ENCODE measurements at regions of chr11 and their contacts with region 1.

Region 1: DNA sequence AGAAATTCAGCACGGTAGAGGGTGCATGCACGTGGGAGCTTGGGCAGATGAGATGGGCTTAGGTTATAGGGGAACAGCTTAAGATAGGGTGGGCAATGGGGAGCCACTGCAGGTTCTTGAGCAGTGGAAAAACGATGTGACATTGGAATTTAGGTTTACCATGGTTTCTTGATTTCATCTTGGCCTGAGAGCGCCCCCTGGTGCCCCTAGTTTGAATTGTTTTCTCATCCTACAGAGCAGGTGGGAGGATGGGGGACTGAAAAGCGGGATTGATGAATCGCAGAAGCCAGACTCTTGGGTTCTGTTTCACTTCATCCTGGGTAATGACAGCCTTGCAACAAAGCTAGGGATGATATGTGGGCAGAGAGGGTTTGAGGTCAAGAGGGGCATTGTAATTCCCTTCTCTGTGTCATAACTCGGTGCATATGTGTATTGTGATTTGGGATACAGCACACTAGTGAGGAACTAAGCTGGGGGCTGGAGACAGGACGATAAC is 6.7 kb upstream of the MCAM start:
- DNase-seq: peak; percentile 64
- CTCF ChIP-seq: peak; percentile 89

Region 2: DNA sequence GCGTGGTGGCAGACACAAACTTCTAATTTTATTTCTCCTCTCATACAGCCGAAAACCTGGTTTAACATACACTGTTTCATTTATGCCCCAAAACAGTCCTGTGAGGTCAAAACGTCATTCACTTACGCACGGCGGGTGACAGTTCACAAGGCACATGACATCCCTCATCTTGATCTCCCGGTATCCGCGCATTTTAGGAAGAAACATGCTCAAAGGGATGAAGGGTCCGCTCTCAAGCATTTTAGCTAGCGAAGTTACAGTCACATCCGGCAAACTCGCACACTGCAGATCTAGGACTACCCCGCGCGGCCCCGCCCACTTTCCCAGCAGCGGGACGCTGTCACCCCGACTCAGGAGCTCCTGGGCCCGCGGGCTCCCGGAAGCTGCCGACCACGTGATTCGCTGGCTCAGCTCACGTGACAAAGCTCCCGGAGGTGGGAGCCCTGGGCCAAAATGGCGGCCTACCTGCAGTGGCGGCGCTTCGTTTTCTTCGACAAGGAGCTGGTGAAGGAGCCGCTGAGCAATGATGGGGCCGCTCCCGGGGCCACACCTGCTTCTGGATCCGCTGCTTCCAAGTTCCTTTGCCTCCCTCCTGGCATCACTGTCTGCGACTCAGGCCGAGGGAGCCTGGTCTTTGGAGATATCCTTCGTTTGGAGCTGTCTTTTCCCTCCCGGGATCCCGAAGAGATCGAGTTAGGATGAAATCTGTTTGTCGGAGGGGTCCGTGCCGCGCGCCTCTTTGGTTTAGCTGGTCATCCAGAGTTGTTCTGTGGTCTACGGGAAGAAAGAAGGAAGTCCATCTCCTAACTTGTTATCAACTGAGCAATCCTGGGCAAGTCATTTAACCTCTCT is 256.0 kb before region 1 on chr11 and contains the start of gene VPS11:
- CTCF ChIA-PET with region 1: interaction called, 12 read pairs
- POLR2A ChIA-PET with region 1: no interaction called
- DNase-seq: peak; percentile 99
- CTCF ChIP-seq: no peak

Region 3: GRCh38 chr11:119121008-119121810 is 202.4 kb before region 1 on chr11 and contains the start of gene HINFP:
- CTCF ChIA-PET with region 1: interaction called, 15 read pairs
- POLR2A ChIA-PET with region 1: no interaction called
- DNase-seq: peak; percentile 99
- CTCF ChIP-seq: no peak

Region 4: GRCh38 chr11:119205574-119206510 is 117.7 kb before region 1 on chr11 and contains the start of gene CBL:
- CTCF ChIA-PET with region 1: interaction called, 37 read pairs
- POLR2A ChIA-PET with region 1: no interaction called
- DNase-seq: peak; percentile 95
- CTCF ChIP-seq: peak; percentile 81

Region 5: DNA sequence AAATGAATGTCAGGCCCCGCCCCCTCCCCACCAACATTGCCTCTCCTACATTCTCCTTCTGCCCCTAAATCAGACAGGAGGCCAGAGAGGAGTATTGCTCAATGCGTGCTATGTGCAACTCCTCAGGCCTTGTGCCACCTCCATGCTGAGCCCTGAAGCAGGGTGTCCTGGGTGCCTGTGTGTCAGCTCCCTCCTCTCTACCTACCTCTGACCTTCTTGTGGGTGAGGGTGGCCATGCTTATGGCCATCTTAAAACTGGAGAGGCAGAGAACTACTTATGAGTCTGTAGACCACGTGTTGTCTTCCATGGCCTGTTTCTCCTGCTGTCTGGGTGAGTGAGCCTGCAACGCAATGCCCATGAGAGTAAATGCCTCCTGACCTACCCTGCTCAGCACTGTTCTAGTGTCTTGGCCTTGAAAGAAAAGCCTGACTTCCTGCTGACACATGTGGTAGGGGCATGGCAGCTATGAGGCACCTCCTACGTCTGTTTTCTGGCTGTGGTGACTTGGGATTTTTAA is 17.2 kb before region 1 on chr11:
- CTCF ChIA-PET with region 1: interaction called, 85 read pairs
- POLR2A ChIA-PET with region 1: no interaction called
- DNase-seq: no peak
- CTCF ChIP-seq: no peak

Region 6: DNA sequence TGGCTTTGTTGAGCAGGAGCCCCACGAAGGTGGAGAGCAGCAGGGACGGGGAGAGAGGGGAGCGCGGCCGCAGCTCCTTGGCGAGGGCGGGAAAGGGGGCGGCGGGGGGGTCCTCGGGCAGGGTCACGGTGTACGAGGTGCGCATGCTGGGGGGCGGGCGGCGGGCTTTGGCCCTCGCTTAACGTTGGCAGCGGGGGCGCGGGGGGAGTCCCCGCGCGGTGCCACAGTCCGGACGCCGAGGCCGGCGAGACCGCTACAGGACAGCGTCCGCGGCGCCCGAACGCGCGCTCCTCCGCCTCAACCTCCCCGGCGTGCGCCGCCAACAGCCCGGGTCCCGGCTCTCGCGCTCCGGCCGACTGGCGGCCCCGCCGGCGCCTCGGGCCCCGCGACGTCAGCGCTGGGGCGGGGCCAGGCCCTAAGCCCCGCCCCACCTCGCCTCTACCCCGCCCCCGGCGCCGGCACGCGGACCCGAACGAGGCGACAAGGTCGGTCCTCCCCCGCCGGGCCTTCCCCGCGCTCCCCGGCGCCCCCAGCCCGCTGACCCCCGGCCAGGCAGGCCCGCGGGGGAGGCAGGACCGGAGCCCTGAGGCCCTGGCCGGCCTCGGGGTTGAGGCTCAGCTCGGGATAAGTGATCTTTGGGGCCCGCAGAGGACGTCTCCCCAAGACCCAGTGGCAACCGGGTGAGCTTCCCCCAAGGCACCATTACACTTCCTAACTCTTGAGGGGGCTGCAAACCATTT is 40.4 kb after region 1 on chr11:
- CTCF ChIA-PET with region 1: interaction called, 10 read pairs
- POLR2A ChIA-PET with region 1: interaction called, 3 read pairs
- DNase-seq: peak; percentile 82
- CTCF ChIP-seq: no peak

Region 7: GRCh38 chr11:119450590-119451326 is 127.2 kb after region 1 on chr11:
- CTCF ChIA-PET with region 1: no interaction called
- POLR2A ChIA-PET with region 1: no interaction called
- DNase-seq: no peak
- CTCF ChIP-seq: no peak

Region 8: GRCh38 chr11:119634301-119634700 is 310.7 kb after region 1 on chr11:
- CTCF ChIA-PET with region 1: no interaction called
- POLR2A ChIA-PET with region 1: no interaction called
- DNase-seq: no peak
- CTCF ChIP-seq: no peak